ENCODE measurements at regions of chr5 and their contacts with region 1.

Region 1: GRCh38 chr5:10106806-10107205 is 142.9 kb downstream of the ATPSCKMT start:
- DNase-seq: no peak
- CTCF ChIP-seq: no peak

Region 2: DNA sequence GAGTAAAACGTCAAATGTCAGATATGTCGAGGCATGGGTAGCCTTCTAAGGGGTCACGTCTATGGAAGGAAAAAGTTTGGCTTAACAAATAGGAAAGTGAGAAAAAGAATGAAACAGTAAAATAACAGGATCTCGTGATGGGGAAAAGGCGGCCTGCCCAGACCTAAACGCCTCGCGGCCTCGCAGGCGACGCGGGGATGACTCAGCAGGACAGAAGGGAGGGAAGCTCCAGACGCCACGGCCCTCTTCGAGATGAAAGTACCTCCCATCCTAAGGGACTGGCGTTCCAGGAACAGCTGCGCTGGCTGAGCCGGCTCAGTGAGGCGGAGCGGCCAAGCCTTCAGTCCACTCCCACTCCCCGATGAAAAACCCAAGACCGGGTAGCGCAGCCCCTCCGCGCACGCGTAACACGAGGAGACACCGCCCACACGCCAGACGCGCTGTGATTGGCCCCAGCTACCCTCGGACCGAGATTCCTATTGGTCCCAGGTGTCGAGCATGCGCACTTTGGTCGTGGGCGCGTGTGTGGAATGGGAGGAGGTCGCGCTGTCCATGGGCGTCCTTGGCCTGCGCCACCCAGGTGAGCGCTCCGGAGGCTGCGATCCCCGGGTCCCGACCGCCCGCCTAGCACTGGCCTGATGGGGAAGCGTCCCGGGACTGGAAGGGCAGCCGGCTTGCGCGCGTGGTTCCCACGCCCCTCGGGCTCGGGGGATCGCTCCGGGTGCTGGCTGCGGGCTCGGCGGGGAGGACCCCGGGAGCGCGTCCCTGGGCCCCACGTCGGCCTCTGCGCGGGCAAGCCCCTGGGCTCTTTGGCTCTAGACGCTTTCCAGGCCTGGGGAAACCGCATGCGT is 1649.4 kb before region 1 on chr5:
- CTCF ChIA-PET with region 1: no interaction called
- POLR2A ChIA-PET with region 1: interaction called, 10 read pairs
- DNase-seq: peak; percentile 76
- CTCF ChIP-seq: no peak

Measured in GM10248 (cell line).